ENCODE measurements at regions of chr13 and their contacts with region 1.

Region 1: GRCh38 chr13:32936716-32937115 is 79.5 kb upstream of the KL start:
- DNase-seq: no peak
- H3K4me3 ChIP-seq: no peak overlapping the region
- H3K27ac ChIP-seq: no peak overlapping the region
- H3K4me1 ChIP-seq: no peaks in the 10 kb centered on the region
- H3K27me3 ChIP-seq: no peaks in the 10 kb centered on the region
- CTCF ChIP-seq: no peak
- EP300 ChIP-seq: no peak
- POLR2A ChIP-seq: no peak

Region 2: DNA sequence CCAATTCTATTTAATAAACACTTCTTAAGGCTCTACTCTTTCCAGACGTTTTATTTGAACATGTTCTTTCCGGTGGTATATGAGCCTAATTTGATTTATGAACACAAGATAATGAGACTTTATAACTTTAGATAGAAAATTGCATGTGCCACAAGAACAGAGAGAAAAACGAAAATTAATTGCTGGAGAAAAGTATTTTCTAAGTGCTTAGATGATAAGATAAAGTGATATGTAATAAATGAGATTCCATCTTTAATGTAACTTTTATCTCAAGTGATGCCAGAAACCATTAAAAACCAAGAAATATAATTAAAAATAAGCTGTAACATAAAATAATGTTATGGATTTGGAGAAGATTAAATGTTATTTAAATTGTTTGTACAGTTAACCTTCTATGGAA is 46.3 kb after region 1 on chr13:
- intact Hi-C with region 1: loop called in 1 of 4 experiments (anchors 2 kb)
- DNase-seq: no peak
- H3K4me3 ChIP-seq: no peak overlapping the region
- H3K27ac ChIP-seq: no peak overlapping the region
- H3K4me1 ChIP-seq: no peaks in the 10 kb centered on the region
- H3K27me3 ChIP-seq: no peaks in the 10 kb centered on the region
- CTCF ChIP-seq: no peak
- EP300 ChIP-seq: no peak
- POLR2A ChIP-seq: no peak

Region 3: DNA sequence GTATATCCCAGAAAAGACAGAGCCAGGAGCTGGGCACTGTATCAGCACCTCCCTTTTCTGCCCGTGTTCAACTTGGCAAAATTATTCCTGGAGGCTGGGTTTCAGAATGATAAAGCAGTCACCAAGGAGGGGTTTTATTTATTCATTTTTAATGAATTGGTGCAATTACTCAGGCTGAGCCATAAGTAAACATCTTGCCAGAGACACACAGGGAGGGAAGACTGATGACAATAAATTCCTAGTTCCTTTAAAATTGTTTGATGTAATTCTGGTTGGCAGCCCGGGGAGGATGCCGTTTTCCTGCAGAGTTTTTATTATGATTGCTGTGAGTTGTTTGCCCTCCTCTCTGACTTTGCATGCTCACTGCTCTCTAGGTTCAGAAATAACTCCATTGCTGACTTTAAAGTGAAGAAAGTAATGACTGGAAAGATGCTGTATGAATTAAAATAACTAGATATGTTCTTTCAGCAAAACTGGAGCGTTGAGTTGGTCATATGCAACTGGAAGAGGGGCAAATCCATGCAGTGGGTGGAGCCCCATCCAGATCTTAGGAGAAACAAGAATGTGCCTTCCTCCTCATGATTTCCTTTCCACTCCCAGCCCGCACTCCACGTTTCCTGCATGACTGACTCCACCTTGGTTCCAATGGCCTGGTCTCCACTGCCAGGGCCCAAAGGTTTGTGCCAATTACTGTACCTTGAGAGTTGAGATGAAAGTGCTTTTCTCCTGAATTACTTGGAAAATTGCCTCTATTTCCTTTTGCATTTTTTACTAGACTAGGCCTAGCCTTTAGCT is 1063.3 kb after region 1 on chr13:
- intact Hi-C with region 1: no loop called
- DNase-seq: no peak
- H3K4me3 ChIP-seq: no peak overlapping the region
- H3K27ac ChIP-seq: no peak overlapping the region
- H3K4me1 ChIP-seq: no peaks in the 10 kb centered on the region
- H3K27me3 ChIP-seq: no peaks in the 10 kb centered on the region
- CTCF ChIP-seq: no peak
- EP300 ChIP-seq: no peak
- POLR2A ChIP-seq: no peak